ENCODE measurements at regions of chr6 and their contacts with region 1.

Region 1: DNA sequence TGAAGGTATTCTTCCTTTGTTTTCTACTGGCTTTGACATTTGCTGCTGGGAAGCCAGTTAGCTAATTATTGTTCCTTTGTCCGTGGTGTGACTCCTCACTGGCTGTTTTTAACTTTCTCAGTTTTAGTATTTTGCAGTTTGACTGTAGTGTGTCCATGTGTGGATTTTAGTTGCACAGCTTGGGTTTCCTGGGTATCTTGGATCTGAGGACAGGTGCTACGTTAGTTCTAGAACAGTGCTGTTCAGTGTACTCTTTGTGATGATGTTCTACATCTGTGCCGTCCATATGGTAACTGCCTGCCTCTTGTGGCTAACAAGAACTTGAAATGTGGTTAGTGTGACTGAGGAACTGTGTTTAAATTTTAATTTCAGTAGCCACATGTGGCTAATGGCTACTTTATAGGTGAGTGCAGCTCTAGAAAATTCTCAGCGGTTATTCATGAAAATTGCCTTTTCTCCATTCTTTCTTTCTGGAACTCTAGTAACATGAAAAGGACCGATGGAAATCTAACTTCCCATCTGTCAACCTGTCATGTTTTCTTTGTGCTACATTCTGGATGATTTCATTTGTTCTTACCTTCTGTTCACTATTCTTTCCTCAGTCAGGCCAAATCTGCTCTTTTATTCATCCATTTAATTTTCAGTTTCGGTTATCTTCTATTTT is 7.4 kb downstream of the SNX9 start:
- DNase-seq: no peak
- H3K4me3 ChIP-seq: no peak overlapping the region
- H3K27ac ChIP-seq: peak overlapping the region; percentile 8 to 70
- H3K4me1 ChIP-seq: peaks cover 0 to 18% of the 10 kb centered on the region in 2 donors
- H3K27me3 ChIP-seq: no peaks in the 10 kb centered on the region
- CTCF ChIP-seq: no peak
- POLR2A ChIP-seq: no peak

Region 2: DNA sequence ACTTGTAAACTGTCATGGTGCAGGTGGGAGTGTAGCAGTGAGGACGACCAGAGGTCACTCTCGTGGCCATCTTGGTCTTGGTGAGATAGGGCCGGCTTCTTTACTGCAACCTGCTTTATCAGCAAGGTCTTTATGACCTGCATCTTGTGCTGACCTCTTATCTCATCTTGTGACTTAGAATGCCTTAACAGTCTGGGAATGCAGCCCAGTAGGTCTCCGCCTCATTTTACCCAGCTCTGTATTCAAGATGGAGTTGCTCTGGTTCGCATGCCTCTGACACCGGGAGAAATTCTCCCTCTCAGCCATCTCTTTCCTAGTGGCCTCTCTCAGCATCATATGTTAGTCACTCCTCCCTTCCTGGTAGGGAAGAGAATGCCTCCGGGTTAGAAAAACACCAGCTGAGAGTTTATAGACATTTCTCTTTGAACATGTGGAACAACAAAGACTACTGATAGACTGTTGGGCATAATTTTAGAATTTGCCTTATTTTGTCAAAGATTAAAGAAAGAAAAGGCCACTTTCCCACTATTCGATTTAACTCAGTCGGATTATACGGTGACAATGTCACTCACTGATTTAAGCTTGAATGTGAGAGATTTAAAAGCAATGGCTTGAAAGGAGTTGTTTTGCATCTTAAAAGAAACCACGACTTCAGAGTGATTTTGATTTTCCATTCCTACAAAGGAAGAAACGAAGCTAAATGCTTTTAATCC is 75.3 kb before region 1 on chr6:
- intact Hi-C with region 1: loop called (anchors 2 kb)
- DNase-seq: no peak
- H3K4me3 ChIP-seq: no peak overlapping the region
- H3K27ac ChIP-seq: no peak overlapping the region
- H3K4me1 ChIP-seq: peaks cover 0 to 4% of the 10 kb centered on the region in 2 donors
- H3K27me3 ChIP-seq: no peaks in the 10 kb centered on the region
- CTCF ChIP-seq: no peak
- POLR2A ChIP-seq: no peak

Region 3: GRCh38 chr6:157867155-157867559 is 36.7 kb after region 1 on chr6:
- intact Hi-C with region 1: loop called (anchors 1 kb)
- DNase-seq: no peak
- H3K4me3 ChIP-seq: no peak overlapping the region
- H3K27ac ChIP-seq: peak overlapping the region in 1 of 2 donors; percentile 2
- H3K4me1 ChIP-seq: peaks cover 0 to 2% of the 10 kb centered on the region in 2 donors
- H3K27me3 ChIP-seq: no peaks in the 10 kb centered on the region
- CTCF ChIP-seq: no peak
- POLR2A ChIP-seq: no peak

Region 4: GRCh38 chr6:157921685-157922367 is 91.3 kb after region 1 on chr6:
- intact Hi-C with region 1: no loop called
- DNase-seq: no peak
- H3K4me3 ChIP-seq: no peak overlapping the region
- H3K27ac ChIP-seq: peak overlapping the region in 1 of 2 donors; percentile 19
- H3K4me1 ChIP-seq: no peaks in the 10 kb centered on the region
- H3K27me3 ChIP-seq: no peaks in the 10 kb centered on the region
- CTCF ChIP-seq: no peak
- POLR2A ChIP-seq: no peak

Measured in breast epithelium (tissue), 4 donors.